CD4-positive, alpha-beta memory T cell (primary cell): ENCODE measurements at regions of chr13 and their contacts with region 1.

Region 1: DNA sequence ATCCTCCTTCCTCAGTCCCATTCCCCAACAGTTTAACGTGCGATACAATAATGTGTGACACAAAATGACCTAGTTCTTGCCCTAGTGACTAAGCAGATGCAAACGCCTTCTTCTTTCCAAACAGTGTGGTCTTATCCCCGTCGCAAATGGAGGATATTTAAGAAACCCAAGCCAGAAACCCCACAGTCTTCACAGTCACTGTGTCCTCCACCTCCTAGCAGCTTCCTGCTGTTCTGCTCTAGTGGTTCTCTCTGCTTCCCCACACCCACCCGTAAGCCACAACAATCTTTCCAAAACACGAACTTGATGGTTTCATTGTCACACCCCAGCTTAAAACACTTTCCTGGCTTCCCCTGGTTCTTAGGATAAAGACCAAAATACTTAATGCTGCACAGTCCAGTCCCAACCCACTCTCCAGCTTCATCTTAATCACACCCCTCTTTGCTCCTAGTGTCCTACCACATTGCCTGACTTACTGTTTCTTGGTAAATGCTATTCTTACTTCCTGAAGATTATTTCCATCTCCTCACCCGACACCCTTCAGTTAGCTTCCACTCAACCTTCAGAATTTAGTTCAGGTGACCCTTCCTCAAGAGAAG is 32.3 kb downstream of the ITM2B start:
- DNase-seq: peak in 1 of 5 donors; percentile 6
- H3K4me3 ChIP-seq: no peak overlapping the region
- H3K4me3 Mint-ChIP-seq: peak overlapping the region in 5 of 8 donors; percentile 11 to 61 (median 47)
- H3K27ac ChIP-seq: no peak overlapping the region
- H3K27ac Mint-ChIP-seq: peak overlapping the region; percentile 25 to 89 (median 81)
- H3K4me1 ChIP-seq: peaks cover 33% of the 10 kb centered on the region
- H3K4me1 Mint-ChIP-seq: peaks cover 38 to 62% (median 45%) of the 10 kb centered on the region in 4 donors
- H3K27me3 ChIP-seq: no peaks in the 10 kb centered on the region
- H3K27me3 Mint-ChIP-seq: no peaks in the 10 kb centered on the region

Region 2: GRCh38 chr13:48194379-48194754 is 70.9 kb before region 1 on chr13:
- CTCF ChIA-PET with region 1: no interaction called
- POLR2A ChIA-PET with region 1: no interaction called
- intact Hi-C with region 1: no loop called
- DNase-seq: no peak
- H3K4me3 ChIP-seq: no peak overlapping the region
- H3K4me3 Mint-ChIP-seq: peak overlapping the region in 2 of 8 donors; percentile 26 to 72
- H3K27ac ChIP-seq: no peak overlapping the region
- H3K27ac Mint-ChIP-seq: peak overlapping the region in 3 of 7 donors; percentile 1 to 30 (median 13)
- H3K4me1 ChIP-seq: peaks cover 13% of the 10 kb centered on the region
- H3K4me1 Mint-ChIP-seq: peaks cover 7 to 26% (median 15%) of the 10 kb centered on the region in 4 donors
- H3K27me3 ChIP-seq: no peaks in the 10 kb centered on the region
- H3K27me3 Mint-ChIP-seq: no peaks in the 10 kb centered on the region

Region 3: GRCh38 chr13:48251611-48252081 is 13.7 kb before region 1 on chr13:
- CTCF ChIA-PET with region 1: interaction called, 3 read pairs
- POLR2A ChIA-PET with region 1: interaction called, 3 read pairs
- intact Hi-C with region 1: loop called (anchors 1 kb)
- DNase-seq: no peak
- H3K4me3 ChIP-seq: no peak overlapping the region
- H3K4me3 Mint-ChIP-seq: peak overlapping the region in 6 of 8 donors; percentile 8 to 57 (median 26)
- H3K27ac ChIP-seq: no peak overlapping the region
- H3K27ac Mint-ChIP-seq: peak overlapping the region in 6 of 7 donors; percentile 4 to 45 (median 29)
- H3K4me1 ChIP-seq: peaks cover 65% of the 10 kb centered on the region
- H3K4me1 Mint-ChIP-seq: peaks cover 43 to 80% (median 62%) of the 10 kb centered on the region in 4 donors
- H3K27me3 ChIP-seq: no peaks in the 10 kb centered on the region
- H3K27me3 Mint-ChIP-seq: no peaks in the 10 kb centered on the region

Region 4: DNA sequence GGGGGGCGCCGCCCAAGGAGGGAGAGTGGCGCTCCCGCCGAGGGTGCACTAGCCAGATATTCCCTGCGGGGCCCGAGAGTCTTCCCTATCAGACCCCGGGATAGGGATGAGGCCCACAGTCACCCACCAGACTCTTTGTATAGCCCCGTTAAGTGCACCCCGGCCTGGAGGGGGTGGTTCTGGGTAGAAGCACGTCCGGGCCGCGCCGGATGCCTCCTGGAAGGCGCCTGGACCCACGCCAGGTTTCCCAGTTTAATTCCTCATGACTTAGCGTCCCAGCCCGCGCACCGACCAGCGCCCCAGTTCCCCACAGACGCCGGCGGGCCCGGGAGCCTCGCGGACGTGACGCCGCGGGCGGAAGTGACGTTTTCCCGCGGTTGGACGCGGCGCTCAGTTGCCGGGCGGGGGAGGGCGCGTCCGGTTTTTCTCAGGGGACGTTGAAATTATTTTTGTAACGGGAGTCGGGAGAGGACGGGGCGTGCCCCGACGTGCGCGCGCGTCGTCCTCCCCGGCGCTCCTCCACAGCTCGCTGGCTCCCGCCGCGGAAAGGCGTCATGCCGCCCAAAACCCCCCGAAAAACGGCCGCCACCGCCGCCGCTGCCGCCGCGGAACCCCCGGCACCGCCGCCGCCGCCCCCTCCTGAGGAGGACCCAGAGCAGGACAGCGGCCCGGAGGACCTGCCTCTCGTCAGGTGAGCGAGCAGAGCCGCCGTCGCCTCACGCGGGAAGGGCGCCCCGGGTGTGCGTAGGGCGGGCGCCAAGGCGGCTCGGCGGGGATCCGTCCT is 38.2 kb after region 1 on chr13 and contains the start of gene RB1:
- CTCF ChIA-PET with region 1: no interaction called
- POLR2A ChIA-PET with region 1: no interaction called
- intact Hi-C with region 1: loop called (anchors 5 kb)
- DNase-seq: peak; percentile 91 to 93 (median 92)
- H3K4me3 ChIP-seq: peak within 1 kb of the TSS; percentile 76 to 94
- H3K4me3 Mint-ChIP-seq: peak within 1 kb of the TSS; percentile 95 to 99 (median 97)
- H3K27ac ChIP-seq: peak within 1 kb of the TSS; percentile 96
- H3K27ac Mint-ChIP-seq: peak within 1 kb of the TSS; percentile 98 to 100 (median 99)
- H3K4me1 ChIP-seq: peaks cover 38% of the 10 kb centered on the region
- H3K4me1 Mint-ChIP-seq: peaks cover 21 to 41% (median 29%) of the 10 kb centered on the region in 4 donors
- H3K27me3 ChIP-seq: no peaks in the 10 kb centered on the region
- H3K27me3 Mint-ChIP-seq: no peaks in the 10 kb centered on the region
- total RNA-seq, gene RB1: 20.0 to 26.0 TPM

Region 5: DNA sequence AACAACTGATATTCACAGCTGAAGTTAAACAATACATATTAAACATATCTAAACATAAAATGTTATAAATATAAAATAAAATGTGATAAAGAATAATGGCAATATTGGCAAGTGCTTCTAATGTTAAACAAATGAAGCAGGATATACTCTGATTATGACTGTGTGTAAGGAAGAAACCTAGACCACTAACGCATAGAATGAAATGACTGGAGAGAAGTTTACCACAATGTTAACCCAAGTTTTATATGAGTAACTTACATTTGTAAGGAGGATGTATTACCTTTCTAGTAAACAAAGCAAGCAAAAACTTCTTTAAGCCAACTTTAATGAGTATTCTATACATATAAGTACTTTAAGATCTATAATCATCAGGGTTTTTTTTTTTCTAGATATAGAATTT is 81.3 kb after region 1 on chr13:
- CTCF ChIA-PET with region 1: no interaction called
- POLR2A ChIA-PET with region 1: no interaction called
- intact Hi-C with region 1: no loop called
- DNase-seq: no peak
- H3K4me3 ChIP-seq: no peak overlapping the region
- H3K4me3 Mint-ChIP-seq: no peak overlapping the region
- H3K27ac ChIP-seq: no peak overlapping the region
- H3K27ac Mint-ChIP-seq: no peak overlapping the region
- H3K4me1 ChIP-seq: no peaks in the 10 kb centered on the region
- H3K4me1 Mint-ChIP-seq: peaks cover 0 to 4% (median 2%) of the 10 kb centered on the region in 4 donors
- H3K27me3 ChIP-seq: no peaks in the 10 kb centered on the region
- H3K27me3 Mint-ChIP-seq: no peaks in the 10 kb centered on the region